Aorta (tissue), 5 donors: ENCODE measurements at regions of chr10 and their contacts with region 1.

Region 1: GRCh38 chr10:79195091-79195923 is 126.5 kb downstream of the ZMIZ1 start:
- DNase-seq: peak; percentile 89 to 95
- ATAC-seq: peak; percentile 92
- H3K4me3 ChIP-seq: no peak overlapping the region
- H3K27ac ChIP-seq: peak overlapping the region in 1 of 2 donors; percentile 23
- H3K4me1 ChIP-seq: no peaks in the 10 kb centered on the region
- H3K27me3 ChIP-seq: no peaks in the 10 kb centered on the region

Region 2: GRCh38 chr10:78047314-78047891 is 1147.9 kb before region 1 on chr10:
- intact Hi-C with region 1: loop called (anchors 2 to 5 kb)
- DNase-seq: peak; percentile 90 to 95
- ATAC-seq: peak; percentile 86
- H3K4me3 ChIP-seq: no peak overlapping the region
- H3K27ac ChIP-seq: no peak overlapping the region
- H3K4me1 ChIP-seq: no peaks in the 10 kb centered on the region
- H3K27me3 ChIP-seq: no peaks in the 10 kb centered on the region

Region 3: DNA sequence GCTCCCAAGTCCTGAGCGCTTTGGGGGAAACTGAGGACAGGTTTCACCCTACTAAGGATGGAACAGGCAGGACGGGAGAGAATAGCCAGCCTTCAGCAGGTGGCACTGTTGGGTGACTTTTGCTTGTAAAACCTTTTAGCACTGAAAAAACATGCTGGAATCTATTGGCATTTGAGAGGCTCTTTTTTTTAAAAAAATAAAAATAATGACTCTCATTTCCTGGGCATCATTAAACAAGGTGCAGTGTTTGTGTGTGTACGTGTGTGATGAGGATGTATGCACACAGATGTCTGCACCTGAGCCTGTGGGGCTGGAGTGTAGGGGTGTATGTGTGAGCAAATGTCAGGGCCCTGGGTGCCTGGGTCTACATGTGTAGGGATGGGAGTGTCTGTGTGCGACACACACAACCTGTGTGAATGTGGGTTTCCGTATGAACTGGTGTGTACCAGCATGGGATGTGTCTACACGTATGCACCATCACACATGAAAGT is 983.7 kb before region 1 on chr10:
- intact Hi-C with region 1: loop called (anchors 2 to 5 kb)
- DNase-seq: peak in 1 of 2 donors; percentile 65
- ATAC-seq: no peak
- H3K4me3 ChIP-seq: no peak overlapping the region
- H3K27ac ChIP-seq: no peak overlapping the region
- H3K4me1 ChIP-seq: no peaks in the 10 kb centered on the region
- H3K27me3 ChIP-seq: no peaks in the 10 kb centered on the region

Region 4: GRCh38 chr10:78657163-78657861 is 538.0 kb before region 1 on chr10:
- intact Hi-C with region 1: loop called in 1 of 2 experiments (anchors 10 kb)
- DNase-seq: peak; percentile 86 to 90
- ATAC-seq: peak; percentile 83
- H3K4me3 ChIP-seq: no peak overlapping the region
- H3K27ac ChIP-seq: no peak overlapping the region
- H3K4me1 ChIP-seq: no peaks in the 10 kb centered on the region
- H3K27me3 ChIP-seq: no peaks in the 10 kb centered on the region

Region 5: GRCh38 chr10:78972947-78973900 is 222.1 kb before region 1 on chr10:
- intact Hi-C with region 1: loop called in 1 of 2 experiments (anchors 5 kb)
- DNase-seq: peak; percentile 90 to 91
- ATAC-seq: peak; percentile 72
- H3K4me3 ChIP-seq: peak overlapping the region; percentile 17 to 45
- H3K27ac ChIP-seq: peak overlapping the region; percentile 78 to 88
- H3K4me1 ChIP-seq: peaks cover 0 to 3% of the 10 kb centered on the region in 2 donors
- H3K27me3 ChIP-seq: no peaks in the 10 kb centered on the region

Region 6: GRCh38 chr10:79073784-79074432 is 121.4 kb before region 1 on chr10:
- intact Hi-C with region 1: loop called (anchors 1 to 5 kb)
- DNase-seq: peak in 1 of 2 donors; percentile 70
- ATAC-seq: no peak
- H3K4me3 ChIP-seq: no peak overlapping the region
- H3K27ac ChIP-seq: no peak overlapping the region
- H3K4me1 ChIP-seq: peaks cover 0 to 2% of the 10 kb centered on the region in 2 donors
- H3K27me3 ChIP-seq: no peaks in the 10 kb centered on the region